ENCODE measurements at regions of chr10 and their contacts with region 1.

Region 1: DNA sequence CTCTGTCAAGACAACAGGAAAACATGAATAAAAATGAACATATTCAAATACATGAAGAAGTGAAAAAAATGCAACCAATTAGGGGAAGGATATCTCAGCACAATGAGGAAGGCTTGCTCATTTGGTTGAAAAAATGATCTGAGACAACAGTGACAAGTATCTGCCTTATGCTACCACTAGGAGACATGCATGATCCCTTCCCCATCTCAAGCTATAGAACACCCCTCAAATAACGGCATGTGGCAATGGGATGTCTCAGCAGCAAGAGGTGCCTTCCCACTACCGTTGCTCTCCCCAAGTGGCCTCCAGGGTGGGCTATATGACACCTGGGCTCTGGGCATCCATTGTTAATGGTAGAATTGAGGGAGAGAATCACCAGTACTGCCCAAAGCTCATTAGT is 98.1 kb upstream of the RSU1 start:
- DNase-seq: peak in 2 of 9 experiments; percentile 31 to 48
- ATAC-seq: no peak
- H3K4me3 ChIP-seq: no peak overlapping the region
- H3K4me3 Mint-ChIP-seq: no peak overlapping the region
- H3K27ac ChIP-seq: no peak overlapping the region
- H3K27ac Mint-ChIP-seq: no peak overlapping the region
- H3K4me1 ChIP-seq: no peaks in the 10 kb centered on the region
- H3K4me1 Mint-ChIP-seq: peaks cover 2% of the 10 kb centered on the region
- H3K27me3 ChIP-seq: no peaks in the 10 kb centered on the region
- H3K27me3 Mint-ChIP-seq: no peaks in the 10 kb centered on the region
- CTCF ChIP-seq: no peak

Region 2: DNA sequence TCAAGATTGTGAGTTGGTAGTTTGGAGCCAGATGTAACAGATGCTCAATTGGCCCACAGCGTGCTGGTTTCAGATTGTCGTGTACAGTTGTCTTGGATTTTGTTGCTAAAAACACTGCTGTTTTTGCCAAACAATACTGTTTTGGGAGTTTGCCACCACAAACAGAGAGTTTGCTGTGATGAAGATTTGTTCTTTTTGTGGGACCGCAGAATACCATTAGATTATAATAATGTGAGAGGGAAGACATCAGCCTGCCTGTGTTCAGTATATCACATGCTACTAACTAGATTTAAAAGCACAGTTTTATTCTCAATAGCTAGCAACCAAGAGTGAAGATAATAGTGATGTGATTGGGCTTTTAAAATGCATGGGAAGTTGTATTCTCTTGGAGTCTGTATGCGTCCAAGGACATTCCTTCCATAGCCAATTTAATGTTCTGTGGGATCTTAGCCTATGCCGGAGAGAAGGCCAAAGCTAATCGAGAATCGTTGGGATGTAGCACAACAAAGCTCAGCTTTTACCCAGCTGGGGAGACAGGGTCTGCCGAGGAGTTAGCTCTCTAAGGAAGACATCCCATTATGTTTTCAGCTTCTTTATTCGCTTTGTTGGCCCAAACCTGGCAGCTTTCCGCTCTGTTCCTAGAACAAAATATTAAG is 1176.9 kb before region 1 on chr10:
- CTCF ChIA-PET with region 1: no interaction called
- POLR2A ChIA-PET with region 1: no interaction called
- intact Hi-C with region 1: no loop called
- DNase-seq: no peak
- ATAC-seq: no peak
- H3K4me3 ChIP-seq: no peak overlapping the region
- H3K4me3 Mint-ChIP-seq: no peak overlapping the region
- H3K27ac ChIP-seq: no peak overlapping the region
- H3K27ac Mint-ChIP-seq: no peak overlapping the region
- H3K4me1 ChIP-seq: no peaks in the 10 kb centered on the region
- H3K4me1 Mint-ChIP-seq: no peaks in the 10 kb centered on the region
- H3K27me3 ChIP-seq: no peaks in the 10 kb centered on the region
- H3K27me3 Mint-ChIP-seq: peaks cover 12% of the 10 kb centered on the region
- CTCF ChIP-seq: no peak

Region 3: GRCh38 chr10:16886031-16886430 is 29.3 kb before region 1 on chr10:
- CTCF ChIA-PET with region 1: no interaction called
- POLR2A ChIA-PET with region 1: no interaction called
- intact Hi-C with region 1: no loop called
- DNase-seq: no peak
- ATAC-seq: no peak
- H3K4me3 ChIP-seq: no peak overlapping the region
- H3K4me3 Mint-ChIP-seq: no peak overlapping the region
- H3K27ac ChIP-seq: no peak overlapping the region
- H3K27ac Mint-ChIP-seq: no peak overlapping the region
- H3K4me1 ChIP-seq: no peaks in the 10 kb centered on the region
- H3K4me1 Mint-ChIP-seq: peaks cover 2% of the 10 kb centered on the region
- H3K27me3 ChIP-seq: no peaks in the 10 kb centered on the region
- H3K27me3 Mint-ChIP-seq: no peaks in the 10 kb centered on the region
- CTCF ChIP-seq: no peak

Region 4: DNA sequence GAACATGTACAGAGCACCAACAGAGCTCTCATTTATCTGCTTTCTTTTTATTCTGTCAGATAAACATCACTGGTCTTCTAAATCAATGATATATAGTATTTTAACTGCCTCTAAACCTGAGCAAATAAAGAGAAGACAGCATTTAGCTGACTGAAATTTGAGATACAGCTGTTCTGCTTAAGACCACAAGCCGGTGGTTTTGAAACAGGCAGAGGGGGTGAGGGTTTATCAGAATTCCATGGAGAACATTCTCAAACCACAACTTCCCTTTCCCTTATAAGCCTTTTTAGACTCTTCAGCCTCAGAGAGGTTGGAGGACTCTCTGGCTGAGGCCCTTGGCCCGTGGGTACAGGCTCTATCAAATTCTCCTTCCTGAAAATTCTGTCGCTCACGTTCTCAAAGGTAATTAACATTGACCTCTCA is 10.7 kb before region 1 on chr10:
- CTCF ChIA-PET with region 1: no interaction called
- POLR2A ChIA-PET with region 1: no interaction called
- intact Hi-C with region 1: no loop called
- DNase-seq: no peak
- ATAC-seq: no peak
- H3K4me3 ChIP-seq: no peak overlapping the region
- H3K4me3 Mint-ChIP-seq: no peak overlapping the region
- H3K27ac ChIP-seq: no peak overlapping the region
- H3K27ac Mint-ChIP-seq: no peak overlapping the region
- H3K4me1 ChIP-seq: no peaks in the 10 kb centered on the region
- H3K4me1 Mint-ChIP-seq: peaks cover 4% of the 10 kb centered on the region
- H3K27me3 ChIP-seq: no peaks in the 10 kb centered on the region
- H3K27me3 Mint-ChIP-seq: no peaks in the 10 kb centered on the region
- CTCF ChIP-seq: no peak

Region 5: DNA sequence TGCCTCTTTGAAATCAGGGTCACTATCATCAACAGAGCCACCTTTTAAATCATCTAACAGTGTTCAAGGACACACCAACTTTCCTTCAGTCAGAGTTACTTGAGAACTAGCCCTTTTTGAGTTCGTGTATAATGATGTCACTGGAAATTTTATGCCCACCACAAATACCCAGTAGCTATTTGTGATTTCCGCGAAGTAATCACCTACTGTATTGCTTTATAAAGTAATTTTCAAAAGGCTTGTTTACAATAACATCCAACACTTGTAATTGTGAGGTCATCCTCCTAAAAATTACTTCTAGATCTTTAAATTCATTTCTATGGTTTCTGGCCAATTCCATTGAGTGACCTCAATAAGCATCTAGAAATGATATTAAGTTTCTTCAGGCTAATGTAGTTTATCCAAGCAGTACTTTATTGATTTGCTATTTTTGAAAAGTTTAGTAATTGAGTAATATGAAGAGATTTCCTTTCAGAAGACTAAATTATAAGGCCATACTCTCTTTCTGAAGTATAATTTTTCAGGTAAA is 273.4 kb after region 1 on chr10:
- CTCF ChIA-PET with region 1: no interaction called
- POLR2A ChIA-PET with region 1: no interaction called
- intact Hi-C with region 1: loop called in 1 of 2 experiments (anchors 5 kb)
- DNase-seq: no peak
- ATAC-seq: no peak
- H3K4me3 ChIP-seq: no peak overlapping the region
- H3K4me3 Mint-ChIP-seq: no peak overlapping the region
- H3K27ac ChIP-seq: no peak overlapping the region
- H3K27ac Mint-ChIP-seq: no peak overlapping the region
- H3K4me1 ChIP-seq: no peaks in the 10 kb centered on the region
- H3K4me1 Mint-ChIP-seq: peaks cover 8% of the 10 kb centered on the region
- H3K27me3 ChIP-seq: no peaks in the 10 kb centered on the region
- H3K27me3 Mint-ChIP-seq: no peaks in the 10 kb centered on the region
- CTCF ChIP-seq: no peak

Measured in CD8-positive, alpha-beta T cell (primary cell).